Activated CD4-positive, alpha-beta T cell treated with anti-CD3 and anti-CD28 coated beads for 36 hours (primary cell): ENCODE measurements at regions of chr2 and their contacts with region 1.

Region 1: GRCh38 chr2:230658877-230659652 is 53.6 kb upstream of the CAB39 start:
- DNase-seq: peak; percentile 90
- ATAC-seq: peak; percentile 74
- H3K4me3 Mint-ChIP-seq: peak overlapping the region; percentile 73
- H3K27ac Mint-ChIP-seq: peak overlapping the region; percentile 97
- H3K4me1 Mint-ChIP-seq: peaks cover 92% of the 10 kb centered on the region
- H3K27me3 Mint-ChIP-seq: no peaks in the 10 kb centered on the region

Region 2: GRCh38 chr2:229243890-229244560 is 1415.0 kb before region 1 on chr2:
- CTCF ChIA-PET with region 1: no interaction called
- POLR2A ChIA-PET with region 1: no interaction called
- intact Hi-C with region 1: no loop called
- DNase-seq: no peak
- ATAC-seq: no peak
- H3K4me3 Mint-ChIP-seq: no peak overlapping the region
- H3K27ac Mint-ChIP-seq: no peak overlapping the region
- H3K4me1 Mint-ChIP-seq: no peaks in the 10 kb centered on the region
- H3K27me3 Mint-ChIP-seq: no peaks in the 10 kb centered on the region

Region 3: DNA sequence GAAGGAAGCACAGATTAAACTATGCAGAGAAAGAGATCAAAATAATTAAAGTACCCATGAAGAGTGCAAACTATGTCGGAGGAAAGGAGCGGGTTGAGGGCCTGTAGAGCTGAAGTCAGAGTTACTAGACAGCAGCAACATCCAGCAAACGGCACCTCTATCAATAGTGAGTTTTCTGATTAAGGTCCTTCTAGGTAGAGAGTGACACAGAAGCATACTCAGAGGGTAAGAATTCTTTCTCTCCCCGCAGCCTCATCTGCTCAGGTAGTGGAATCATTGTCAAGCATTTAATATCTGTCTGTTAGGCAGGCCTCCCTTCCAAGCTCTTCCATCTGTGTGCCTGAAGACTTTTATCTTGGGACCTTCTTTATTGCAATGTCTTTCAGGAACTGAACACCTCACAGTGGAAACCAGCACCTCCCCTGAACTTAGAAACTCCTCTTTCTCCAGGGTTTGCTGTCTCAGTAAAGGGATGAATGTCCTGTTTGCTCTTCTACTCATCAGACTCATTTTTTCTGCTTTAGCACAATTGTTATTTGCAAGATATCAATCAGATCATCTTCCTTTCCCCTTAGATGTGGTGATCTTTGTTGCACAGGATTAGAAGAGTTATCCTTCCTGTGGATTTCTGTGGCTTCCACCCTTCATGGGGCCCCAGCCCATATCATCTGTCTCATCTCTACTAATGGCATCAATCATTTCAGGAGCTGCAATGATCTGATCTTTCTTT is 404.7 kb before region 1 on chr2:
- CTCF ChIA-PET with region 1: no interaction called
- POLR2A ChIA-PET with region 1: no interaction called
- intact Hi-C with region 1: loop called in 1 of 2 experiments (anchors 2 kb)
- DNase-seq: peak; percentile 73
- ATAC-seq: peak; percentile 79
- H3K4me3 Mint-ChIP-seq: no peak overlapping the region
- H3K27ac Mint-ChIP-seq: no peak overlapping the region
- H3K4me1 Mint-ChIP-seq: peaks cover 18% of the 10 kb centered on the region
- H3K27me3 Mint-ChIP-seq: no peaks in the 10 kb centered on the region

Region 4: GRCh38 chr2:230326453-230327417 is 332.3 kb before region 1 on chr2 and contains the start of gene SP140L:
- CTCF ChIA-PET with region 1: interaction called, 6 read pairs
- POLR2A ChIA-PET with region 1: no interaction called
- intact Hi-C with region 1: loop called in 1 of 2 experiments (anchors 2 kb)
- DNase-seq: peak; percentile 89
- ATAC-seq: peak; percentile 97
- H3K4me3 Mint-ChIP-seq: peak within 1 kb of the TSS; percentile 89
- H3K27ac Mint-ChIP-seq: peak within 1 kb of the TSS; percentile 98
- H3K4me1 Mint-ChIP-seq: peaks cover 61% of the 10 kb centered on the region
- H3K27me3 Mint-ChIP-seq: no peaks in the 10 kb centered on the region
- total RNA-seq, gene SP140L: 40.1 to 43.4 TPM

Region 5: DNA sequence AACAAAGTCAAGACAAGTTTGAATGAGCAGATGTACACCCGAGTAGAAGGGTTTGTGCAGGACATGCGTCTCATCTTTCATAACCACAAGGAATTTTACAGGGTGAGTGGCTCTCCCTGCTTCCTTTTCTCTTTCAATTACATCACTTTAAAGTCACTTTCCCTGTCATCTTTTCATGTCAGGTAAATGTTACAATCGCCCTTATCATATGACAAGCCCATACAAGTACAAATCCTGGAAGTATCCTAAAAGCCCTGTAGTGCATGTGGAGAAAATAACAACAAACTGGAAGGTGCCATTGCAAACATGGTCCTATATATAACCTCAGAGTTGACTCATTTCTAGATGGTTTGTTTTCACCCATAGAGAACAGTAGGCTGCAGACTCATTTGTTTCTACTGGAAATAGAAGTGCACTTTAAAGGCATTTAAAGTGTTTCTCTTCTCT is 117.1 kb before region 1 on chr2:
- CTCF ChIA-PET with region 1: no interaction called
- POLR2A ChIA-PET with region 1: no interaction called
- intact Hi-C with region 1: no loop called
- DNase-seq: no peak
- ATAC-seq: peak; percentile 54
- H3K4me3 Mint-ChIP-seq: no peak overlapping the region
- H3K27ac Mint-ChIP-seq: peak overlapping the region; percentile 7
- H3K4me1 Mint-ChIP-seq: peaks cover 18% of the 10 kb centered on the region
- H3K27me3 Mint-ChIP-seq: no peaks in the 10 kb centered on the region

Region 6: DNA sequence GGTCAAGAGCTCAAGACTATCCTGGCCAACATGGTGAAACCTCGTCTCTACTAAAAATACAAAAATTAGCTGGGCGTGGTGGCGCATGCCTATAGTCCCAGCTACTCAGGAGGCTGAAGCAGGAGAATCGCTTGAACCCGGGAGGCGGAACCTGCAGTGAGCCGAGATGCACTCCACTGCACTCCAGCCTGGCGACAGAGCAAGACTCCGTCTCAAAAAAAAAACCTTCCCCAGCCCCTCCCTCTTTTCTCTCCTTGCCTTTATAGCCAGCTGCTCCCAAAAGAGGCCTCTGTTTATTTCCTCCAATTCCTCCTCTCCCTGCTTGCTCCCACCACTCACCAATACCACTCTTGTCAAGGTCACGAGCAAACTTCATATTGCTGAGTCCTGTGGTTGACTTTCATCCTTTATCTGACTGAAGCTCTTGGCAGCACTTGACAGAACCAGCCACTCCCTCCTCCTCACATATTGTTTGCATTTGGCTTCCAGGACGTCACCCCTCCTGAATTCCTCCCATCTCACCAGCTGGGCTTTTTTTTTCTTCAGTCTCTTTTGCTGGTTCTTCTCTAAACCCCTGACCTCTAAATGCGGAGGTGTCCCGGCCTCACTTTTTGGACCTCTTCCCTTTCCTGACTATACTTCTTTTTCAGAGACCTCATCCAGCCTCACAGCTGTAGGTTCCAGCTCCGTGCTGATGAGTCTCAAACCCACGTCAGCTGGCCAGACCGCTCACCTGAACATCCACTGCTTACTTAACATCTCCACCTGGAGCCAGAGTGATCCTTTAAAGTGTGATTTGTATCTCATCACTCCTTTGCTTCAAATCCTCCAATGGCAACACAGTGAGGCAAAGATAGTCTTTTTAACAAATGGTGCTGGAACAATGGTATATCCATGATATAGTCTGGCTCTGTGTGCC is 31.0 kb before region 1 on chr2:
- CTCF ChIA-PET with region 1: no interaction called
- POLR2A ChIA-PET with region 1: no interaction called
- intact Hi-C with region 1: loop called in 1 of 2 experiments (anchors 5 kb)
- DNase-seq: no peak
- ATAC-seq: peak; percentile 44
- H3K4me3 Mint-ChIP-seq: peak overlapping the region; percentile 0
- H3K27ac Mint-ChIP-seq: peak overlapping the region; percentile 24
- H3K4me1 Mint-ChIP-seq: peaks cover 23% of the 10 kb centered on the region
- H3K27me3 Mint-ChIP-seq: no peaks in the 10 kb centered on the region

Region 7: DNA sequence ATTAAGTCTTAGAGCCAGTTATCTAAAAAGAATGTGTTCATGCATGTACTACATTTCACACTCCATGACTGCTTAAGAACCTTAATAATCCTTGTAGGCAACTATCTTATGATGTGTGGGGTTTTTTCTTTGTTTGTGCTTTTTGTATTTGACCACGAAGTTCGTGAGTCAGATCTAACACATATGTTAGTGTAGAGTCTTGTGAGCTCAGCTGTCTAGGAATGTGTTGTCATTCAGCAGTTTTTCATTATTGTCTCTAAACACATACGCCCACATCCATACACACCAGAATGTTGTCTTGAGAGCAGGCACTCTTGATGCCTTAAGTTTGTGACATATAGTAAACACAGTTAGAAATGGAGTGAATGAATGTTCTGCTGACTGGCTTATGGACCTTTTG is 92.0 kb after region 1 on chr2:
- CTCF ChIA-PET with region 1: no interaction called
- POLR2A ChIA-PET with region 1: no interaction called
- intact Hi-C with region 1: loop called in 1 of 2 experiments (anchors 1 kb)
- DNase-seq: no peak
- ATAC-seq: peak; percentile 84
- H3K4me3 Mint-ChIP-seq: no peak overlapping the region
- H3K27ac Mint-ChIP-seq: no peak overlapping the region
- H3K4me1 Mint-ChIP-seq: peaks cover 75% of the 10 kb centered on the region
- H3K27me3 Mint-ChIP-seq: no peaks in the 10 kb centered on the region

Region 8: GRCh38 chr2:230924470-230925341 is 265.6 kb after region 1 on chr2 and contains the start of gene GPR55:
- CTCF ChIA-PET with region 1: no interaction called
- POLR2A ChIA-PET with region 1: no interaction called
- intact Hi-C with region 1: loop called in 1 of 2 experiments (anchors 5 kb)
- DNase-seq: peak; percentile 90
- ATAC-seq: peak; percentile 69
- H3K4me3 Mint-ChIP-seq: peak within 1 kb of the TSS; percentile 76
- H3K27ac Mint-ChIP-seq: peak within 1 kb of the TSS; percentile 95
- H3K4me1 Mint-ChIP-seq: peaks cover 66% of the 10 kb centered on the region
- H3K27me3 Mint-ChIP-seq: peaks cover 4% of the 10 kb centered on the region
- total RNA-seq, gene GPR55: 3.6 to 4.0 TPM